A673 (cell line): ENCODE measurements at regions of chr22 and their contacts with region 1.

Region 1: GRCh38 chr22:30680991-30681770 is 13.5 kb upstream of the OSBP2 start:
- DNase-seq: no peak
- H3K4me3 ChIP-seq: no peak overlapping the region
- H3K27ac ChIP-seq: no peak overlapping the region
- H3K4me1 ChIP-seq: no peaks in the 10 kb centered on the region
- H3K27me3 ChIP-seq: peaks cover 5% of the 10 kb centered on the region
- CTCF ChIP-seq: no peak

Region 2: GRCh38 chr22:30606455-30607299 is 74.5 kb before region 1 on chr22 and contains the start of gene TCN2:
- CTCF ChIA-PET with region 1: interaction called, 10 read pairs
- POLR2A ChIA-PET with region 1: no interaction called
- intact Hi-C with region 1: no loop called
- DNase-seq: peak; percentile 67
- H3K4me3 ChIP-seq: peak within 1 kb of the TSS; percentile 57
- H3K27ac ChIP-seq: peak within 1 kb of the TSS; percentile 56
- H3K4me1 ChIP-seq: peaks cover 18% of the 10 kb centered on the region
- H3K27me3 ChIP-seq: no peaks in the 10 kb centered on the region
- CTCF ChIP-seq: no peak
- total RNA-seq, gene TCN2: 7.3 and 9.8 TPM in 2 replicates

Region 3: DNA sequence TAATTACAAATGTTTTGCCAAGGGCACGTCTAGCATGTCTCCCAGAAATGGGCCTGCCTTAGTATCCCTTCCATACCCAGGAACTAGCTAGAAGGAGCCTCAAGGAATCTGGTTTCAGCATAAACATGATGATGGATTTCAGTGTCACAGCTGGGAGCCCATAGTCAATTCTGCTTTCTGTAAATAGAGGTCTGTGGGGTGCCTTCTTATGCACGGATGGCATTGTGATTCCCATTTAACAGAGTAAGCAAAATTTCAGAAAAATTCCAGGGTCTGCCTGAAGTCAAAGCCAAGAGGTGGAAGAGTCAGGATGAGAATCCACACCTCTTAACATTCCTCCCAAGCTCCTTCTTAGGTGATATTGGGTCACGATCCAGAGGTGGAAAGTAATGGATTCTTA is 25.6 kb before region 1 on chr22:
- CTCF ChIA-PET with region 1: interaction called, 11 read pairs
- POLR2A ChIA-PET with region 1: no interaction called
- intact Hi-C with region 1: no loop called
- DNase-seq: no peak
- H3K4me3 ChIP-seq: no peak overlapping the region
- H3K27ac ChIP-seq: no peak overlapping the region
- H3K4me1 ChIP-seq: no peaks in the 10 kb centered on the region
- H3K27me3 ChIP-seq: no peaks in the 10 kb centered on the region
- CTCF ChIP-seq: no peak

Region 4: GRCh38 chr22:30717331-30717921 is 36.2 kb after region 1 on chr22:
- CTCF ChIA-PET with region 1: no interaction called
- POLR2A ChIA-PET with region 1: no interaction called
- intact Hi-C with region 1: no loop called
- DNase-seq: peak; percentile 65
- H3K4me3 ChIP-seq: no peak overlapping the region
- H3K27ac ChIP-seq: no peak overlapping the region
- H3K4me1 ChIP-seq: no peaks in the 10 kb centered on the region
- H3K27me3 ChIP-seq: no peaks in the 10 kb centered on the region
- CTCF ChIP-seq: no peak

Region 5: DNA sequence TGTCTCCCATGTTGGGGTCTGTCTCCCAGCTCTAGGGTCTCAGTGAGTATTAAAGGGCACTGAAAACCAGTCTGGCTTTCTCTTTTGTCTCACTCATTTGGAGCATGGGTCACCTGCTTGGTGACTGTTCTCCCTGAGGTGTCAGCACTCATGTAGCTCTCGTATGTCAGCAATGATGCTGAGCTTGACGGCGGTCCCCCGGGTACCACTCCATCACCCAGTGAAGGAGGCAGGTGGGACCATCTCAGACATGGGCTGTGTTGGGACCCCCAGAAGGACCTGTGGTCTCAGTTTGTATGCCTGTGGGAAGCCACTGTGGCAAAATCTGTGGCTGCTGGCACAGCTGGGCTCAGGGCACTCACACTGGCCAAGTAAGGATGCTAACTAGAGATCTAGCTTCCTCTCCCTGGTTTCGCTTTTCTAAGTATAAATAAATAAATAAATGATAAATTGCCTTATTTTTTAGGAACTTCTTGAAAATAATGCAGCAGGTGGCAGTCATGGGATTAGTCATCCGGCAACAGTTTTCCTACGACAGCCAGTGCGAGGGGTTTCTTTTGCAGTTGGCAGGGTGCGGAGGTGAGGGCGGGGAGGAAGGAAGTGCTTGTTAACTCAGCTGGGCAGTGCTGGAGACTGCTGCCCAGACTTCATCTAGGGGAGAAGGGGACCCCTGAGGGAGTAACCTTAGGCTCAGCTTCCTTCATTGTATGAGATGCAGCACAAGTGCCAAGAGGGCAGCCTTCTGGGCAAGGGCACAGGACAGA is 62.3 kb after region 1 on chr22:
- CTCF ChIA-PET with region 1: no interaction called
- POLR2A ChIA-PET with region 1: no interaction called
- intact Hi-C with region 1: no loop called
- DNase-seq: no peak
- H3K4me3 ChIP-seq: no peak overlapping the region
- H3K27ac ChIP-seq: no peak overlapping the region
- H3K4me1 ChIP-seq: no peaks in the 10 kb centered on the region
- H3K27me3 ChIP-seq: no peaks in the 10 kb centered on the region
- CTCF ChIP-seq: no peak

Region 6: DNA sequence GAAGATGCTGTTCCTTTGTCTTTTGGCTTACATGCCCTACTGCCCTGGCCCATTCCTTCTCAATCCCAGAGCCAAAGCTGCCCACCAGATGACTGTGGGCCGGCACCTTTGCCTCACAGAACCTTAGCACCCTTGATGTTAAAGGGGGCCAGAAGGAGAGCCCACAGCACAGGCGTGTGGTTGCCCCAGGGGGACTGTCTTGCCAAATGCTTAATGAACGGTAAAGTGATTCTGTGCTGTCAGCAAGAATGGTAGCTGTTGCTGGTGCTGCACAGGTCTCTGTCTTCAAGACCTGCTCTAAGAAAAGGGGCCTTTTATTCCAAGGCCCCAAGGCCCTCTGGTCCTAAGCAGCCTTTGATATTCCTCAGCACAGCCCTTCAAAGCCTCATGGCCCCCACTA is 174.1 kb after region 1 on chr22:
- CTCF ChIA-PET with region 1: no interaction called
- POLR2A ChIA-PET with region 1: no interaction called
- intact Hi-C with region 1: no loop called
- DNase-seq: no peak
- H3K4me3 ChIP-seq: no peak overlapping the region
- H3K27ac ChIP-seq: no peak overlapping the region
- H3K4me1 ChIP-seq: no peaks in the 10 kb centered on the region
- H3K27me3 ChIP-seq: peaks cover 8% of the 10 kb centered on the region
- CTCF ChIP-seq: no peak